Gastrocnemius medialis (tissue), 4 donors: ENCODE measurements at regions of chr11 and their contacts with region 1.

Region 1: GRCh38 chr11:124194698-124195410 is 11.7 kb downstream of the OR10D3 start:
- DNase-seq: no peak
- ATAC-seq: peak in 1 of 2 donors; percentile 39
- H3K4me3 ChIP-seq: no peak overlapping the region
- H3K27ac ChIP-seq: no peak overlapping the region
- H3K4me1 ChIP-seq: no peaks in the 10 kb centered on the region
- H3K27me3 ChIP-seq: no peaks in the 10 kb centered on the region
- CTCF ChIP-seq: peak in 1 of 5 experiments; percentile 46
- POLR2A ChIP-seq: no peak

Region 2: DNA sequence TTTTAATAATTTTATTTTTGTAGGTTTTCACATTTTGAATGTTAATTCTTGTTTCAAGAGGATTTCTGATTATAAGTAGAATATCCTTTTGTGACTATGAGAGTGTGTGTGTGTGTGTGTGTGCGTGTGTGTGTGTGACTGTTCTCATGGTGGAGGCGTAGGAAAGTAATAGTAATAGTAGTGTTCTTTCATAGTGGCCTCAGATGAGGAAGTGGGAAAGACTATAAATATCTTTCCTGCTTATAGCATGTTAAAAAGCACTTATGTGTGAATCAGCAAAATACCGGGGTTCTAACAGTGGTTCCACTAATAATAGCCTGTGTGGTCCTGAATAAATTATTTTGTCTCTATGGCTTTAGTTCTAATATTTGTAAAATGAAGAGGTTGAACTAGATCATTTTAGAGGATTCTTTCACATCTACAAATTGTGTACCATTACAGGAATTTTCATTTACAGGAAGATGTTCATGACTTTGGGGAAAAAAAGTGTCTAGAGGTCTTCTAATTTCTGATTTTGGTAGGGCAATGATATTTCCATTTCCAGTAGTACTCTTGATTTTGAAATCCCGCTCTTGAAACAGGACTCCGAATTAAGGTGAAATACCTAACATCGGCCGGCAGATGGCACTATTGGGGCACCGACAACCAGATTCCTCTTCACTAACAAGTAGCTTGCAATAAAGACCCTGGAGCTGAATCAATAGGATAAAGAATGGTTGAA is 123.8 kb before region 1 on chr11:
- in situ Hi-C with region 1: loop called in 1 of 4 experiments (anchors 5 kb)
- intact Hi-C with region 1: loop called (anchors 5 kb)
- DNase-seq: peak; percentile 24
- ATAC-seq: peak in 1 of 2 donors; percentile 64
- H3K4me3 ChIP-seq: no peak overlapping the region
- H3K27ac ChIP-seq: no peak overlapping the region
- H3K4me1 ChIP-seq: no peaks in the 10 kb centered on the region
- H3K27me3 ChIP-seq: peaks cover 0 to 7% (median 4%) of the 10 kb centered on the region in 3 donors
- CTCF ChIP-seq: peak in 3 of 5 experiments; percentile 42 to 75 (median 66)
- POLR2A ChIP-seq: no peak

Region 3: DNA sequence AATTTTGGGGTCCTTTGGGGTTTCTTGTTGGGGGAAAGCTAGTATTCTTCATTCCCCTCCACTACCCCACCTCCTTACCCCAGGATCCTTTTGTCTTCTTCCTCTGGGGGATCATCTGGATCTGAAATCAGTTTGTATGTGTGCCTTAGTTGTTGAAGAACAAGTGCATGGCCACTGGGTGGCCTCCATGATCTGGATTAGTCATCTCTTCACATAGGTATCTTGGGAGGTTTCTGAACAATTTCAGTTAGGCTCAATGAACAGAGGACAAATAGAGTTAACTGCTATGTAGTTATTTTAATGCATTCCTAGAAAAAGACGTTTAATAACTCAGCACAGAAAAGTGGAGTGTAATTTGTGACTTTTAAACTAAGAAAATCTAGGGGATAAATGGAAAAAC is 86.7 kb before region 1 on chr11:
- in situ Hi-C with region 1: no loop called
- intact Hi-C with region 1: no loop called
- DNase-seq: no peak
- ATAC-seq: no peak
- H3K4me3 ChIP-seq: no peak overlapping the region
- H3K27ac ChIP-seq: no peak overlapping the region
- H3K4me1 ChIP-seq: no peaks in the 10 kb centered on the region
- H3K27me3 ChIP-seq: no peaks in the 10 kb centered on the region
- CTCF ChIP-seq: no peak
- POLR2A ChIP-seq: no peak

Region 4: GRCh38 chr11:124159481-124159880 is 35.4 kb before region 1 on chr11:
- in situ Hi-C with region 1: no loop called
- intact Hi-C with region 1: no loop called
- DNase-seq: no peak
- ATAC-seq: no peak
- H3K4me3 ChIP-seq: no peak overlapping the region
- H3K27ac ChIP-seq: no peak overlapping the region
- H3K4me1 ChIP-seq: no peaks in the 10 kb centered on the region
- H3K27me3 ChIP-seq: no peaks in the 10 kb centered on the region
- CTCF ChIP-seq: no peak
- POLR2A ChIP-seq: no peak

Region 5: GRCh38 chr11:124233410-124233809 is 38.6 kb after region 1 on chr11:
- in situ Hi-C with region 1: no loop called
- intact Hi-C with region 1: no loop called
- DNase-seq: no peak
- ATAC-seq: no peak
- H3K4me3 ChIP-seq: no peak overlapping the region
- H3K27ac ChIP-seq: no peak overlapping the region
- H3K4me1 ChIP-seq: no peaks in the 10 kb centered on the region
- H3K27me3 ChIP-seq: no peaks in the 10 kb centered on the region
- CTCF ChIP-seq: no peak
- POLR2A ChIP-seq: no peak

Region 6: DNA sequence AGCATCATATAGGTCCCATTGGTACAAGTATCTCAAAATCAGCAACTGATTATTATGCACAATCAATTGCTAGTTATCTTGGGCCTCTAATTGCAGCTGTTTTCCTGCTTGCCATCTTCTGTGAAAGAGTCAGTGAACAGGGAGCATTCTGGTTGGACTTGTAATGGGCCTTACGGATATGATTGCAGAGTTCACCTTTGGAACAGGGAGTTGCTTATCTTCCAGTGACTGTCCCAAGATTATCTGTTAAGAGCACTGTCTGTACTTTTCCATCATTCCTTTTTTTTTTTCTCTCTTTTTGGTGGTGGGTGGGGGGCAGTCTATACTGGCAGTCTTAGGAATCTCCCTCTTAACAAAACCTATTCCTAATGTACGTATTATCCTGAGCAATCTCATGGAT is 79.1 kb after region 1 on chr11:
- in situ Hi-C with region 1: loop called in 1 of 4 experiments (anchors 10 kb)
- intact Hi-C with region 1: no loop called
- DNase-seq: no peak
- ATAC-seq: no peak
- H3K4me3 ChIP-seq: no peak overlapping the region
- H3K27ac ChIP-seq: no peak overlapping the region
- H3K4me1 ChIP-seq: no peaks in the 10 kb centered on the region
- H3K27me3 ChIP-seq: no peaks in the 10 kb centered on the region
- CTCF ChIP-seq: no peak
- POLR2A ChIP-seq: no peak